HepG2 (cell line): ENCODE measurements at regions of chr12 and their contacts with region 1.

Region 1: GRCh38 chr12:6944381-6945186 is 762 bp downstream of the C12orf57 start:
- DNase-seq: peak; percentile 90
- ATAC-seq: peak; percentile 58
- H3K4me3 ChIP-seq: peak overlapping the region; percentile 54 to 79 (median 73)
- H3K27ac ChIP-seq: peak overlapping the region; percentile 98
- H3K4me1 ChIP-seq: peaks cover 38% of the 10 kb centered on the region
- H3K27me3 ChIP-seq: no peaks in the 10 kb centered on the region
- CTCF ChIP-seq: peak; percentile 96
- EP300 ChIP-seq: no peak
- POLR2A ChIP-seq: no peak
- RAD21 ChIP-seq: peak; percentile 81

Region 2: DNA sequence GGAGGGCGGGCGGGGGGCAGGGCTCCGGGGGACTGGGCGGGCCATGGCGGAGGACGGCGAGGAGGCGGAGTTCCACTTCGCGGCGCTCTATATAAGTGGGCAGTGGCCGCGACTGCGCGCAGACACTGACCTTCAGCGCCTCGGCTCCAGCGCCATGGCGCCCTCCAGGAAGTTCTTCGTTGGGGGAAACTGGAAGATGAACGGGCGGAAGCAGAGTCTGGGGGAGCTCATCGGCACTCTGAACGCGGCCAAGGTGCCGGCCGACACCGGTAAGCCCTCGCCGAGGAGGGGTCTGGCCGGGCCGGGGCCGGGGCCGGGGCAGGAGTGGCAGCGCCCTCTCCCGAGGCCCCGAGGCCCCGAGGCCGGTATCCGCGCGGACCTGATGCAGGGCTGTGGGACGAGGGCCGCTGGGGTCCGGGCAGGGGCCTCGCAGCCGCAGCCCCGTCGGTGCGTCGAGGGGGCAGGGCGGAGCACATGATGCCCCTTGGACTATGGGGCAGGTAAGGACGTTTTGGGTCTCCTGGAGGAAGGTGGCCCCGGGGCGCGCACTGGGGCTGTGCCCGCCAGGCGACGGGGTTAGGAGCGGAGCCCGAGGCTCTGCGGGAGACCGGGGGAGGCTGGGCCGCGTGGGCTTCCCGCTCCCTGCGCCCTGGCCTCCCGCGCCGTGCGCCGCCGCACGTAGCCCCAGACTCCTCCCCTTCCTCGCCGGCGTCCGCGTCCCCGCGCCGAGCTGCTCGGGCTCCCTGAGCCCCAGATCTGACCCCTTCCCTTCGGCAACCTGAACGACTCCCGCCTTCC is 77.0 kb before region 1 on chr12 and contains the start of gene TPI1:
- CTCF ChIA-PET with region 1: interaction called, 14 read pairs
- POLR2A ChIA-PET with region 1: interaction called, 45 read pairs
- in situ Hi-C with region 1: no loop called
- intact Hi-C with region 1: no loop called
- DNase-seq: peak; percentile 39
- ATAC-seq: peak; percentile 73
- H3K4me3 ChIP-seq: peak within 1 kb of the TSS; percentile 88 to 96 (median 92)
- H3K27ac ChIP-seq: peak within 1 kb of the TSS; percentile 87
- H3K4me1 ChIP-seq: peaks cover 45% of the 10 kb centered on the region
- H3K27me3 ChIP-seq: no peaks in the 10 kb centered on the region; a peak in 1 of 5 replicates
- CTCF ChIP-seq: peak; percentile 5; the same call in 1 of the 2 replicates
- EP300 ChIP-seq: no peak
- POLR2A ChIP-seq: peak in 1 of 2 experiments; percentile 98; a peak in 2 of 4 replicates
- RAD21 ChIP-seq: peak; percentile 59
- total RNA-seq, gene TPI1: 945 and 1,237 TPM in 2 replicates

Region 3: GRCh38 chr12:6890789-6891645 is 53.6 kb before region 1 on chr12:
- CTCF ChIA-PET with region 1: no interaction called
- POLR2A ChIA-PET with region 1: interaction called, 18 read pairs
- in situ Hi-C with region 1: no loop called
- intact Hi-C with region 1: no loop called
- DNase-seq: peak; percentile 88
- ATAC-seq: peak; percentile 96
- H3K4me3 ChIP-seq: peak overlapping the region; percentile 50 to 79 (median 65)
- H3K27ac ChIP-seq: peak overlapping the region; percentile 94
- H3K4me1 ChIP-seq: peaks cover 52% of the 10 kb centered on the region
- H3K27me3 ChIP-seq: no peaks in the 10 kb centered on the region; a peak in 1 of 5 replicates
- CTCF ChIP-seq: peak; percentile 87
- EP300 ChIP-seq: peak in 1 of 2 experiments; percentile 56; a peak in 3 of 4 replicates
- POLR2A ChIP-seq: peak; percentile 73 to 78
- RAD21 ChIP-seq: peak; percentile 99

Region 4: GRCh38 chr12:6965026-6965661 is 20.6 kb after region 1 on chr12:
- CTCF ChIA-PET with region 1: interaction called, 15 read pairs
- POLR2A ChIA-PET with region 1: interaction called, 180 read pairs
- in situ Hi-C with region 1: no loop called
- intact Hi-C with region 1: loop called (anchors 1 kb)
- DNase-seq: peak; percentile 72
- ATAC-seq: peak; percentile 54
- H3K4me3 ChIP-seq: no peak overlapping the region
- H3K27ac ChIP-seq: peak overlapping the region; percentile 46
- H3K4me1 ChIP-seq: peaks cover 57% of the 10 kb centered on the region
- H3K27me3 ChIP-seq: no peaks in the 10 kb centered on the region; a peak in 1 of 5 replicates
- CTCF ChIP-seq: peak; percentile 87
- EP300 ChIP-seq: no peak
- POLR2A ChIP-seq: peak; percentile 4 to 54; a peak in 2 of 4 replicates
- RAD21 ChIP-seq: peak; percentile 65

Region 5: GRCh38 chr12:7047306-7047705 is 102.7 kb after region 1 on chr12:
- CTCF ChIA-PET with region 1: interaction called, 5 read pairs
- POLR2A ChIA-PET with region 1: interaction called, 12 read pairs
- in situ Hi-C with region 1: no loop called
- intact Hi-C with region 1: no loop called
- DNase-seq: no peak
- ATAC-seq: no peak
- H3K4me3 ChIP-seq: no peak overlapping the region
- H3K27ac ChIP-seq: no peak overlapping the region
- H3K4me1 ChIP-seq: peaks cover 38% of the 10 kb centered on the region
- H3K27me3 ChIP-seq: no peaks in the 10 kb centered on the region
- CTCF ChIP-seq: no peak
- EP300 ChIP-seq: no peak
- POLR2A ChIP-seq: no peak
- RAD21 ChIP-seq: no peak

Region 6: GRCh38 chr12:7108796-7109571 is 164.4 kb after region 1 on chr12 and contains the start of gene C1RL:
- CTCF ChIA-PET with region 1: interaction called, 3 read pairs
- POLR2A ChIA-PET with region 1: interaction called, 83 read pairs
- in situ Hi-C with region 1: loop called (anchors 10 kb)
- intact Hi-C with region 1: no loop called
- DNase-seq: peak; percentile 89
- ATAC-seq: peak; percentile 66
- H3K4me3 ChIP-seq: peak within 1 kb of the TSS; percentile 72 to 91 (median 74)
- H3K27ac ChIP-seq: peak within 1 kb of the TSS; percentile 99
- H3K4me1 ChIP-seq: peaks cover 25% of the 10 kb centered on the region
- H3K27me3 ChIP-seq: no peaks in the 10 kb centered on the region; a peak in 1 of 5 replicates
- CTCF ChIP-seq: peak; percentile 95
- EP300 ChIP-seq: peak; percentile 45 to 70; a peak in 3 of 4 replicates
- POLR2A ChIP-seq: peak in 1 of 2 experiments; percentile 58; a peak in 2 of 4 replicates
- RAD21 ChIP-seq: peak; percentile 90
- total RNA-seq, gene C1RL: 14.2 and 28.9 TPM in 2 replicates